ENCODE measurements at regions of chr5 and their contacts with region 1.

Region 1: DNA sequence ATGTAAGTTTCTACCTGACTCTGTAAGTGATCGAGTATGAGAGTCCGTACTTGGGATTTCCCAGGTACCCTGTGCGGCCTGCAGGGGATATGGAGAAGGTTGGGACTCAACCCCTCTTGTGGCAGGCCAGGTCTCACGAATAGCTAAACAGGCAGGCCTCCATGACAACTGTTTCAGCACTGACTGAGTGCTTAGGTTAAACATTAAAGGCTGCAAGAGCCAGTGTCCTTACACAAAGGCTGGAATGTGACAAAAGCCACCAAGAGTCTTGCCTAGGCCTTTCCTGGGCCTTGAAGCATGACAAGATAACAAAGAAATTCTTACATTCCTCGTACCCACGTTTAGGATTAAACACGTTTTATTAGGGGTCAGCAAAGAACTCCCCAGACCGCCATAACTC is 58.6 kb downstream of the THBS4 start:
- DNase-seq: no peak
- H3K4me3 ChIP-seq: no peak overlapping the region
- H3K27ac ChIP-seq: no peak overlapping the region
- H3K4me1 ChIP-seq: no peaks in the 10 kb centered on the region
- H3K27me3 ChIP-seq: no peaks in the 10 kb centered on the region
- CTCF ChIP-seq: no peak
- POLR2A ChIP-seq: no peak

Region 2: GRCh38 chr5:80275347-80275746 is 181.6 kb after region 1 on chr5:
- intact Hi-C with region 1: loop called (anchors 10 kb)
- DNase-seq: no peak
- H3K4me3 ChIP-seq: no peak overlapping the region
- H3K27ac ChIP-seq: no peak overlapping the region
- H3K4me1 ChIP-seq: no peaks in the 10 kb centered on the region
- H3K27me3 ChIP-seq: no peaks in the 10 kb centered on the region
- CTCF ChIP-seq: peak in 1 of 3 experiments; percentile 21
- POLR2A ChIP-seq: no peak

Region 3: DNA sequence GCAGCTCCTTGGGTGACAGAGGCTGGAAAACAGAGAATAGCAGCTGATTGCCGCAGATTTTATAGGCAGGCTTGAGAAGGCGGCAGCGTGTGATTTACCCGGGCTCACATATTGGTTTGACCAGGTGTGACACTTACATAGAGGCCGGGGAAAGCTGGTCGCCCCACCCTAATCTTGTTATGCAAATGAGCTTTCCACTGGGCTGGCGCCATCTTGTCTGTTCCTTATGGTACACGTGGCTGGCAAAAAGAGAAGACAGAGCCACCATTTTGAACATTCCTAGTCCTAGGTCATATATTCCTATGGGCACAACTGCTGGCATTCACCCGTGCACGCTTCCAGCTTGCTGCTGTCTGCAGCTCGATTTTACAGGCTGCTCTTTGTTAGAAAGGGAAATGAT is 214.7 kb after region 1 on chr5:
- intact Hi-C with region 1: loop called (anchors 5 kb)
- DNase-seq: no peak
- H3K4me3 ChIP-seq: no peak overlapping the region
- H3K27ac ChIP-seq: no peak overlapping the region
- H3K4me1 ChIP-seq: no peaks in the 10 kb centered on the region
- H3K27me3 ChIP-seq: no peaks in the 10 kb centered on the region
- CTCF ChIP-seq: no peak
- POLR2A ChIP-seq: no peak

Region 4: GRCh38 chr5:80668016-80668969 is 574.5 kb after region 1 on chr5:
- intact Hi-C with region 1: loop called (anchors 10 kb)
- DNase-seq: no peak
- H3K4me3 ChIP-seq: no peak overlapping the region
- H3K27ac ChIP-seq: no peak overlapping the region
- H3K4me1 ChIP-seq: no peaks in the 10 kb centered on the region
- H3K27me3 ChIP-seq: no peaks in the 10 kb centered on the region
- CTCF ChIP-seq: no peak
- POLR2A ChIP-seq: no peak